CD8-positive, alpha-beta T cell (primary cell): ENCODE measurements at regions of chr2 and their contacts with region 1.

Region 1: GRCh38 chr2:155368934-155369333 is 670.4 kb downstream of the KCNJ3 start:
- DNase-seq: peak in 1 of 9 experiments; percentile 4
- ATAC-seq: no peak
- H3K4me3 ChIP-seq: no peak overlapping the region
- H3K4me3 Mint-ChIP-seq: no peak overlapping the region
- H3K27ac ChIP-seq: no peak overlapping the region
- H3K27ac Mint-ChIP-seq: no peak overlapping the region
- H3K4me1 ChIP-seq: no peaks in the 10 kb centered on the region
- H3K4me1 Mint-ChIP-seq: no peaks in the 10 kb centered on the region
- H3K27me3 ChIP-seq: no peaks in the 10 kb centered on the region
- H3K27me3 Mint-ChIP-seq: no peaks in the 10 kb centered on the region
- CTCF ChIP-seq: no peak

Region 2: GRCh38 chr2:154794406-154794805 is 574.5 kb before region 1 on chr2:
- CTCF ChIA-PET with region 1: no interaction called
- POLR2A ChIA-PET with region 1: no interaction called
- intact Hi-C with region 1: no loop called
- DNase-seq: no peak
- ATAC-seq: no peak
- H3K4me3 ChIP-seq: no peak overlapping the region
- H3K4me3 Mint-ChIP-seq: no peak overlapping the region
- H3K27ac ChIP-seq: no peak overlapping the region
- H3K27ac Mint-ChIP-seq: no peak overlapping the region
- H3K4me1 ChIP-seq: no peaks in the 10 kb centered on the region
- H3K4me1 Mint-ChIP-seq: no peaks in the 10 kb centered on the region
- H3K27me3 ChIP-seq: no peaks in the 10 kb centered on the region
- H3K27me3 Mint-ChIP-seq: no peaks in the 10 kb centered on the region
- CTCF ChIP-seq: no peak

Region 3: GRCh38 chr2:156892467-156893281 is 1523.7 kb after region 1 on chr2:
- CTCF ChIA-PET with region 1: no interaction called
- POLR2A ChIA-PET with region 1: no interaction called
- intact Hi-C with region 1: loop called in 1 of 2 experiments (anchors 2 kb)
- DNase-seq: peak in 2 of 9 experiments; percentile 12 to 22
- ATAC-seq: no peak
- H3K4me3 ChIP-seq: no peak overlapping the region
- H3K4me3 Mint-ChIP-seq: no peak overlapping the region
- H3K27ac ChIP-seq: no peak overlapping the region
- H3K27ac Mint-ChIP-seq: no peak overlapping the region
- H3K4me1 ChIP-seq: no peaks in the 10 kb centered on the region
- H3K4me1 Mint-ChIP-seq: peaks cover 4% of the 10 kb centered on the region
- H3K27me3 ChIP-seq: peaks cover 0 to 3% of the 10 kb centered on the region in 2 experiments
- H3K27me3 Mint-ChIP-seq: peaks cover 8% of the 10 kb centered on the region
- CTCF ChIP-seq: no peak

Region 4: GRCh38 chr2:157194097-157194688 is 1825.3 kb after region 1 on chr2:
- CTCF ChIA-PET with region 1: interaction called, 5 read pairs
- POLR2A ChIA-PET with region 1: no interaction called
- intact Hi-C with region 1: loop called in 1 of 2 experiments (anchors 2 kb)
- DNase-seq: peak in 2 of 9 experiments; percentile 34 to 50
- ATAC-seq: peak; percentile 51
- H3K4me3 ChIP-seq: no peak overlapping the region
- H3K4me3 Mint-ChIP-seq: no peak overlapping the region
- H3K27ac ChIP-seq: no peak overlapping the region
- H3K27ac Mint-ChIP-seq: no peak overlapping the region
- H3K4me1 ChIP-seq: no peaks in the 10 kb centered on the region
- H3K4me1 Mint-ChIP-seq: no peaks in the 10 kb centered on the region
- H3K27me3 ChIP-seq: no peaks in the 10 kb centered on the region
- H3K27me3 Mint-ChIP-seq: no peaks in the 10 kb centered on the region
- CTCF ChIP-seq: peak; percentile 55